A549 (cell line): ENCODE measurements at regions of chr2 and their contacts with region 1.

Region 1: GRCh38 chr2:219119422-219120043 is 41.1 kb downstream of the NHEJ1 start:
- DNase-seq: peak; percentile 45 to 62
- ATAC-seq: peak; percentile 83 to 96
- H3K4me3 ChIP-seq: no peak overlapping the region
- H3K27ac ChIP-seq: no peak overlapping the region
- H3K4me1 ChIP-seq: peaks cover 7% of the 10 kb centered on the region
- CTCF ChIP-seq: peak; percentile 83
- EP300 ChIP-seq: no peak
- POLR2A ChIP-seq: no peak
- RAD21 ChIP-seq: peak; percentile 81 to 84

Region 2: GRCh38 chr2:218876562-218877219 is 242.8 kb before region 1 on chr2:
- CTCF ChIA-PET with region 1: interaction called, 10 read pairs
- POLR2A ChIA-PET with region 1: no interaction called
- DNase-seq: peak; percentile 62 to 72
- ATAC-seq: peak; percentile 33 to 67; a peak in 5 of 6 replicates
- H3K4me3 ChIP-seq: no peak overlapping the region
- H3K27ac ChIP-seq: no peak overlapping the region
- H3K4me1 ChIP-seq: peaks cover 12% of the 10 kb centered on the region; the same call in 1 of the 3 replicates
- CTCF ChIP-seq: peak; percentile 85
- EP300 ChIP-seq: no peak
- POLR2A ChIP-seq: no peak
- RAD21 ChIP-seq: peak; percentile 75 to 90

Region 3: DNA sequence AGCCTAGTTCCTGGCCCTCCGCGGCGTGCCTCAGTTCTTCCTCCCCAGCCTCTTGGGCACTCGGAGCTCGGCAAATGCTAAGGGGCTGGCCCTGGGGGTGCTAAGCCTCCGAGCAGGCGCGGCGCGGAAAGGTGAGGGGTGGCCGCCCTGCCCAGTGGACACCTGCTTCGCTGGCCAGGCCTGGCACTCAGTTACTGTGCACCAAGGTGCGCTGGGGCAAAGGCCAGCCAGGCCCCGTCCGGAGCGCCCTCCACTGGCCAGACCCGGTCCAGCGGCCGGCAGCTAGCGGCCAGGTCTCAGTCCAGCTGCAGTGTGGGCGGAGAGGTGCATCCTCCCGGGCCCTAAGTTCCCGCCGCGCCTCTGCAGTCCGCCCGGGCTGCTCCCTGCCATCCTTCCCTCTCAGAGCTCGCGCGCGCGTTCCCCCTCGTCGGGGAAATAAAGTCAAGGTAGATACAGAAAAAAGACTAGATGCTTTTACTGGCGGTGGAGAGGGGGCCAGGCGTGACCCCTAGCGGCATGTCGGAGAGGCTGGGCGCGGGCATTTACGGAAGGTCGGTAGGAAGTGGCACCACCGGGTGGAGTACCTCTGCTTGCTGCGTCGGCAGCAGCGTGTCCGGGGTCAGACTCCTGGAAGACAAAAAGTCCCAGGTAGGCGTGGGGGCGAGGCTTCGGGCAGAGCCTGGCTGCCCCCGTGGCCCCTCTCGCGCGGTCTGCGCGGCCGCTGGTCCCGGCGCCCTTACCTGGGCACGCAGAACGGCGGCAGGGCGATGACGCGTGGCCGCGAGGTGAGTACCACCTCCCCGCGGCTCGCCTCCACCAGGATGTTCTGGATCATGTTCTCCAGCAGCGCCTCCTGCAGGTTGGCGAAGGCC is 116.9 kb before region 1 on chr2:
- CTCF ChIA-PET with region 1: interaction called, 22 read pairs
- POLR2A ChIA-PET with region 1: no interaction called
- DNase-seq: peak; percentile 82 to 93
- ATAC-seq: peak; percentile 84 to 93
- H3K4me3 ChIP-seq: peak overlapping the region; percentile 59
- H3K27ac ChIP-seq: peak overlapping the region; percentile 64 to 83
- H3K4me1 ChIP-seq: peaks cover 7% of the 10 kb centered on the region
- CTCF ChIP-seq: peak; percentile 68
- EP300 ChIP-seq: no peak
- POLR2A ChIP-seq: peak; percentile 52
- RAD21 ChIP-seq: 0 out of 5 replicates have a peak, but pooled peaks have one; percentile 17 to 19

Region 4: GRCh38 chr2:219073413-219074129 is 46.0 kb before region 1 on chr2:
- CTCF ChIA-PET with region 1: interaction called, 123 read pairs
- POLR2A ChIA-PET with region 1: no interaction called
- DNase-seq: peak; percentile 26 to 73
- ATAC-seq: peak; percentile 68 to 92; a peak in 4 of 6 replicates
- H3K4me3 ChIP-seq: no peak overlapping the region
- H3K27ac ChIP-seq: no peak overlapping the region
- H3K4me1 ChIP-seq: no peaks in the 10 kb centered on the region
- CTCF ChIP-seq: peak; percentile 65
- EP300 ChIP-seq: no peak
- POLR2A ChIP-seq: no peak
- RAD21 ChIP-seq: peak; percentile 59 to 63

Region 5: GRCh38 chr2:219099329-219099728 is 20.2 kb before region 1 on chr2:
- CTCF ChIA-PET with region 1: interaction called, 20 read pairs
- POLR2A ChIA-PET with region 1: no interaction called
- DNase-seq: no peak
- ATAC-seq: no peak
- H3K4me3 ChIP-seq: no peak overlapping the region
- H3K27ac ChIP-seq: no peak overlapping the region
- H3K4me1 ChIP-seq: no peaks in the 10 kb centered on the region
- CTCF ChIP-seq: no peak
- EP300 ChIP-seq: no peak
- POLR2A ChIP-seq: no peak
- RAD21 ChIP-seq: no peak

Region 6: GRCh38 chr2:219133976-219134375 is 14.4 kb after region 1 on chr2:
- CTCF ChIA-PET with region 1: interaction called, 30 read pairs
- POLR2A ChIA-PET with region 1: no interaction called
- DNase-seq: no peak
- ATAC-seq: no peak
- H3K4me3 ChIP-seq: no peak overlapping the region
- H3K27ac ChIP-seq: no peak overlapping the region
- H3K4me1 ChIP-seq: peaks cover 12% of the 10 kb centered on the region
- CTCF ChIP-seq: no peak
- EP300 ChIP-seq: no peak
- POLR2A ChIP-seq: no peak
- RAD21 ChIP-seq: no peak

Region 7: DNA sequence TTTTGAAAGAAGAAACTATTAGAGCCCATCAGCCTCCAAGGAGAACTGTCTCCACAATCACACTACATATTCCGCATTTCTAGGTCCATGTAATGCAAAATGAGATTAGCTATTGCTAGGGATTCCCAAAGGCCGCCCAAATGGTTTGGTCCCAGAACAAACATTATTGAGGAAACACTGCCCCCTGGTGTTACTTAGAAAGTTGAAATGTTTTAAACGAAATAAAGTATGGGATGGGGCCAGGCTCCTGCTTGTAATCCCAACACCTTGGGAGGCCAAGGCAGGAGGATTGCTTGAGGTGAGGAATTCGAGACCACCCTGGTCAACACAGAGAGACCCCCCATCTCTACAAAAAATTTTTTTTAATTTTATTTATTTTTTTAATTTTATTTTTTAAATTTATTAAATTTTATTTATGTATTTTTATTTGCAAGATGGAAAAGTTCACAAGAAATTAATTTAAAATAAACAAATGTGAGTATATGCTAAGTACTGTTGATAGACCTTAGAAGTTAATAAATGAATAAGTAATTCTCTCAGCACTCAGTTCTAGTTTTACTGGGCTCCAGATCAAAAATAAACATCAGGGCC is 35.6 kb after region 1 on chr2:
- CTCF ChIA-PET with region 1: interaction called, 56 read pairs
- POLR2A ChIA-PET with region 1: no interaction called
- DNase-seq: peak; percentile 64 to 77
- ATAC-seq: peak; percentile 74 to 76
- H3K4me3 ChIP-seq: no peak overlapping the region
- H3K27ac ChIP-seq: no peak overlapping the region
- H3K4me1 ChIP-seq: peaks cover 4% of the 10 kb centered on the region; the same call in 1 of the 3 replicates
- CTCF ChIP-seq: peak; percentile 80
- EP300 ChIP-seq: no peak
- POLR2A ChIP-seq: no peak
- RAD21 ChIP-seq: peak; percentile 84 to 90

Region 8: DNA sequence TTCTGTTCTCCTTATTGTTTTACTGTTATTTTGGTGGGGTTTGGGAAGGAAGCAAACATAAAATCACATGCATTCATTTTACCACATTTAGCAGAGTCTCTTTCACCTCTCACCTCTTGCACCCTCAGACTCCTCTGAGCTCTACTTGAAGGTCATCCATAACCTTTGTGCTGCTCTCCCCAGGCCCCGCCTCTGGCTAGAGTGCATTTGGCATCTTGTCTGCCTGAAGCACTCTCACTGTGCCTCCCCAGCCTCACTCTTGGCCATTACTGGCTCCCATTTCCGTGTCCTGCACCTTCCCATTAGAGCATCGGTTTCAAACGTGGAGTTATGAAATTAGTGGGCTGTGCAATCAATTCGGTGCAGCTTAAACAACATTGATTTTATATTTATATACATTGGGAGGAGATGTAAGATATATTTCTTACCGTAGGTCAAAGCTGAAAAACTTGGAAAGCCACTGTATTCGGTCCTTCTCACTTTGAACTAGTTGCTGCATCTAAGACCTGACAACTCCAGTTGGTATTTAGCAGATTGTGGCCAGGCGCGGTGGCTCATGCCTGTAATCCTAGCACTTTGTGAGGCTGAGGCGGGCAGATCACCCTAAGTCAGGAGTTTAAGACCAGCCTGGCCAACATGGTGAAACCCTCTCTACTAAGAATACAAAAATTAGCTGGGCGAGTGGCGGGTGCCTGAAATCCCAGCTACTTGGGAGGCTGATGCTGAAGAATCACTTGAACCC is 80.1 kb after region 1 on chr2:
- CTCF ChIA-PET with region 1: no interaction called
- POLR2A ChIA-PET with region 1: no interaction called
- DNase-seq: no peak
- ATAC-seq: peak in 1 of 2 experiments; percentile 16; a peak in 1 of 6 replicates
- H3K4me3 ChIP-seq: no peak overlapping the region
- H3K27ac ChIP-seq: no peak overlapping the region
- H3K4me1 ChIP-seq: no peaks in the 10 kb centered on the region
- CTCF ChIP-seq: no peak
- EP300 ChIP-seq: no peak
- POLR2A ChIP-seq: no peak
- RAD21 ChIP-seq: no peak

Region 9: DNA sequence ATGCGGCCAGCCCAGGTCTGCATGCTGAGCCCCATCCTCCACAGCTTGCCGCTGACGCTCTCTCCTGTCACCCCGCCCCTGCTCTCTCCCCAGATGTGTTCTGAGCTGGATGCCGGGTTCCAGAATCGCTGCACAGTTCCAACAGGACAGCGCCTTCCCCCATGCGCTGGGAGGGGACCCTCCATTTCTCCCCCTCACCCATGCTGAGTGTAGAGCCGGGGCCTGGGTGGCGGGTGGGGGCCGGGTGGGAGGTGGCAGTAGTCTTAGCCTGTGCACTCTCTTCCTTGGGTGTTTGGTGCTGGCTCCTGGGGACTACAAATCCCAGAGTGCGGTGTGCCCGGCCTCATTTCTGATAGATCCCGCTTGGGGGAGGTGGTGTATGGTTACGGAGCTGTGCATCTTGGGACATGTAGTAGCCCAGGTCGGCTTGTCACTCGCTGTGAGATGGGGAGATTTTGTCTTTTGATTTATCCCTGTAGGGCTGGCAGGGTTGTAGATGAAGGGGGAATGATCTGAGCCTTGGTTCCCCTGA is 166.4 kb after region 1 on chr2:
- CTCF ChIA-PET with region 1: no interaction called
- POLR2A ChIA-PET with region 1: no interaction called
- DNase-seq: no peak
- ATAC-seq: 0 out of 6 replicates have a peak, but pooled peaks of 1 of the 2 experiments have one; percentile 7
- H3K4me3 ChIP-seq: no peak overlapping the region
- H3K27ac ChIP-seq: peak overlapping the region in 1 of 2 experiments; percentile 36; a peak in 1 of 6 replicates
- H3K4me1 ChIP-seq: peaks cover 21% of the 10 kb centered on the region
- CTCF ChIP-seq: no peak
- EP300 ChIP-seq: no peak
- POLR2A ChIP-seq: no peak
- RAD21 ChIP-seq: no peak